Stomach (tissue), 19 donors: ENCODE measurements at regions of chr22 and their contacts with region 1.

Region 1: GRCh38 chr22:48866906-48867681 is 960.6 kb downstream of the BRD1 start:
- DNase-seq: peak in 1 of 2 donors; percentile 29
- H3K4me3 ChIP-seq: no peak overlapping the region
- H3K27ac ChIP-seq: no peak overlapping the region
- H3K4me1 ChIP-seq: no peaks in the 10 kb centered on the region
- H3K27me3 ChIP-seq: peaks cover 0 to 59% (median 5%) of the 10 kb centered on the region in 3 donors
- CTCF ChIP-seq: no peak
- EP300 ChIP-seq: no peak
- POLR2A ChIP-seq: no peak

Region 2: DNA sequence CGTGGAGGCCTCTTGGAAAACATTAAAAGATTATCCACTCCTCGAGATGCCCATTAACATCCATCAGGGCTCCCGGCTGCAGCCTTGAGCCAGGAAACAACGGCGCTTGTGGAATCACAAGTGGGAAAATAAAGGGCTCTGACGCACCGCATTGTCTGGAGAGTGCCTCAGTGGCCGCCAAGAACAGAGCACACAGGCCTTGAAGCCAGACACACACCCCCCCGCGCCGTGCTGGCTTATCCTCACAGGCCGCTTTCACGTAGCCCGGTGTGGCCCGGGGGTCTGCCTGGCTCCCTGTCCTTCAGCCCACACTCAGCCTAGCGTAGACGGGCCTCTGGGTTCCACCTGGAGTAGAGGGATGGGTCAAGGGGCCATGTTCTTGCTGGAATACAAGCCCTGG is 59.9 kb before region 1 on chr22:
- intact Hi-C with region 1: loop called (anchors 10 kb)
- DNase-seq: no peak
- H3K4me3 ChIP-seq: no peak overlapping the region
- H3K27ac ChIP-seq: no peak overlapping the region
- H3K4me1 ChIP-seq: no peaks in the 10 kb centered on the region
- H3K27me3 ChIP-seq: peaks cover 0 to 61% (median 0%) of the 10 kb centered on the region in 3 donors
- CTCF ChIP-seq: no peak
- EP300 ChIP-seq: no peak
- POLR2A ChIP-seq: no peak

Region 3: DNA sequence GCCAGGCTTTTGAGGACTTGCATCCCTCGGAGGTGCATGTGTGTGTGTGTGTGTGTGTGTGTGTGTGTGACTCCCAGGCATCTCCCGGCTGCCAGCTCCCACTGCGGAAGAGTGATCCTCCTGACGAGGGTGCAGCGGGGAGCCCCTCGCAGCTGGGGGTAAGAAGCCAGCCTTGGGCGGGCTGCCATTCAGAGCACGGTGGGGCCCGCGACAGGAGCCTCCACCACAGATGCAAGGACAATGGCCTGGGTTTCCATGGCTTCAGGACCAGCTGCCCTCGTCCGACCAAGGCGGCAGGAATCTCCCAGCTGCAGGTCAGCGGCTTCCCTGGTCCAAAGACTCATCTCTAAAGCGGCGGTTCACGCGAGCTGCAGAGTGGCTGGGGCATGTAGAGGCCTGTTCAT is 52.1 kb after region 1 on chr22:
- intact Hi-C with region 1: no loop called
- DNase-seq: peak in 1 of 2 donors; percentile 16
- H3K4me3 ChIP-seq: no peak overlapping the region
- H3K27ac ChIP-seq: no peak overlapping the region
- H3K4me1 ChIP-seq: no peaks in the 10 kb centered on the region
- H3K27me3 ChIP-seq: peaks cover 0 to 79% (median 6%) of the 10 kb centered on the region in 3 donors
- CTCF ChIP-seq: no peak
- EP300 ChIP-seq: no peak
- POLR2A ChIP-seq: no peak